GM12878 (cell line): ENCODE measurements at regions of chr17 and their contacts with region 1.

Region 1: GRCh38 chr17:78349891-78350642 is 9.8 kb downstream of the SOCS3 start:
- DNase-seq: no peak
- ATAC-seq: no peak
- H3K4me3 ChIP-seq: no peak overlapping the region
- H3K27ac ChIP-seq: no peak overlapping the region
- H3K4me1 ChIP-seq: peaks cover 32% of the 10 kb centered on the region
- H3K27me3 ChIP-seq: no peaks in the 10 kb centered on the region; a peak in 1 of 4 replicates
- CTCF ChIP-seq: no peak
- EP300 ChIP-seq: no peak
- POLR2A ChIP-seq: no peak
- RAD21 ChIP-seq: no peak

Region 2: GRCh38 chr17:78335209-78335608 is 14.9 kb before region 1 on chr17:
- CTCF ChIA-PET with region 1: interaction called, 6 read pairs
- POLR2A ChIA-PET with region 1: interaction called, 13 read pairs
- RAD21 ChIA-PET with region 1: interaction called, 4 read pairs
- SMC1A ChIA-PET with region 1: interaction called, 7 read pairs
- in situ Hi-C with region 1: no loop called
- intact Hi-C with region 1: no loop called
- DNase-seq: no peak
- ATAC-seq: no peak
- H3K4me3 ChIP-seq: no peak overlapping the region
- H3K27ac ChIP-seq: no peak overlapping the region
- H3K4me1 ChIP-seq: peaks cover 38% of the 10 kb centered on the region
- H3K27me3 ChIP-seq: no peaks in the 10 kb centered on the region
- CTCF ChIP-seq: no peak
- EP300 ChIP-seq: no peak
- POLR2A ChIP-seq: no peak
- RAD21 ChIP-seq: no peak

Region 3: GRCh38 chr17:78375401-78376151 is 25.5 kb after region 1 on chr17:
- CTCF ChIA-PET with region 1: no interaction called
- POLR2A ChIA-PET with region 1: no interaction called
- RAD21 ChIA-PET with region 1: no interaction called
- SMC1A ChIA-PET with region 1: no interaction called
- in situ Hi-C with region 1: no loop called
- intact Hi-C with region 1: no loop called
- DNase-seq: no peak
- ATAC-seq: no peak
- H3K4me3 ChIP-seq: no peak overlapping the region
- H3K27ac ChIP-seq: no peak overlapping the region
- H3K4me1 ChIP-seq: peaks cover 19% of the 10 kb centered on the region
- H3K27me3 ChIP-seq: no peaks in the 10 kb centered on the region
- CTCF ChIP-seq: no peak
- EP300 ChIP-seq: no peak
- POLR2A ChIP-seq: no peak
- RAD21 ChIP-seq: no peak